Right cardiac atrium (tissue), 5 donors: ENCODE measurements at regions of chr9 and their contacts with region 1.

Region 1: DNA sequence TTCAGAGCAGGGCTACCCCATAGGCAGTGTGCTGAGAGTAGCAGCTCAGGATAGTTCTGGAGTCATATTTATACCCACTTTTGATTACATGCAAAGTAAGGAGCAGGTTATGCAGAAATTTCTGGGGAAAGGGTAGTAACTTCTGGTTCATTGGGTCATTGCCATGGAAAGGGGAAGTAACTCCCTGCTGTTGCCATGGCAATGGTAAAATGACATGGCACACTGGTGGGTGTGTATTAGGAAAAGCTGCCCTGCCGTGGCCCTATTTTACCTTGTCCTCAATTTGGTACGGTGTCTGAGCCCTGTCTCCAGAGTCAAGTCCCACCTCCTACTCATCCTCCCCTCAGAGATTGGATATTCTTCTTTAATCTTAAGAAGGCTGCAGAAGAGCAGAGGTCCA is 526.7 kb upstream of the TYRP1 start:
- DNase-seq: no peak
- ATAC-seq: no peak
- H3K4me3 ChIP-seq: no peak overlapping the region
- H3K27ac ChIP-seq: no peak overlapping the region
- H3K4me1 ChIP-seq: no peaks in the 10 kb centered on the region
- H3K27me3 ChIP-seq: no peaks in the 10 kb centered on the region

Region 2: DNA sequence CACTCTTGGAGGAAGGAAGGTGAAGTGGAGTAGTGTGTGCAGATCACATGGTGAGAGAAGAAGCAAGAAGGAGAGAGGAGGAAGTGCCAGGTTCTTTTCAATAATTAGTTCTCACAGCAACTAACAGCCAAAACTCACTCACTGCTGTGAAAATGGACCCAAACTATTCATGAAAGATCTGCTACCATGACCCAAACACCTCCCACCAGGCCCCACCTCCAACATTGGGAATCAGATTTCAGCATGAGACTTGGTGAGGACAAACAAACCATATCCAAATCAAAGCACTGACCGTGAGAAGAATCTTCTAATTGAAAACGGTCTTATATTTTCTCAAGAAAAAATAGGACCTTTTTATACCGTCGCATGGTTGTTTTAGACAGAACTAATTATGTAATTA is 57.9 kb after region 1 on chr9:
- intact Hi-C with region 1: loop called in 1 of 4 experiments (anchors 10 kb)
- DNase-seq: no peak
- ATAC-seq: no peak
- H3K4me3 ChIP-seq: no peak overlapping the region
- H3K27ac ChIP-seq: no peak overlapping the region
- H3K4me1 ChIP-seq: no peaks in the 10 kb centered on the region
- H3K27me3 ChIP-seq: no peaks in the 10 kb centered on the region

Region 3: GRCh38 chr9:12511726-12512125 is 345.2 kb after region 1 on chr9:
- intact Hi-C with region 1: no loop called
- DNase-seq: no peak
- ATAC-seq: no peak
- H3K4me3 ChIP-seq: no peak overlapping the region
- H3K27ac ChIP-seq: no peak overlapping the region
- H3K4me1 ChIP-seq: no peaks in the 10 kb centered on the region
- H3K27me3 ChIP-seq: no peaks in the 10 kb centered on the region